Naive thymus-derived CD4-positive, alpha-beta T cell (primary cell): ENCODE measurements at regions of chr20 and their contacts with region 1.

Region 1: GRCh38 chr20:45987108-45987780 is 15.2 kb upstream of the ZNF335 start:
- DNase-seq: peak; percentile 53 to 80 (median 72)
- ATAC-seq: peak; percentile 98
- H3K4me3 ChIP-seq: no peak overlapping the region
- H3K4me3 Mint-ChIP-seq: no peak overlapping the region
- H3K27ac ChIP-seq: no peak overlapping the region
- H3K27ac Mint-ChIP-seq: no peak overlapping the region
- H3K4me1 ChIP-seq: no peaks in the 10 kb centered on the region
- H3K4me1 Mint-ChIP-seq: peaks cover 0 to 13% (median 0%) of the 10 kb centered on the region in 7 donors
- H3K27me3 ChIP-seq: no peaks in the 10 kb centered on the region
- H3K27me3 Mint-ChIP-seq: peaks cover 0 to 28% (median 5%) of the 10 kb centered on the region in 5 donors

Region 2: DNA sequence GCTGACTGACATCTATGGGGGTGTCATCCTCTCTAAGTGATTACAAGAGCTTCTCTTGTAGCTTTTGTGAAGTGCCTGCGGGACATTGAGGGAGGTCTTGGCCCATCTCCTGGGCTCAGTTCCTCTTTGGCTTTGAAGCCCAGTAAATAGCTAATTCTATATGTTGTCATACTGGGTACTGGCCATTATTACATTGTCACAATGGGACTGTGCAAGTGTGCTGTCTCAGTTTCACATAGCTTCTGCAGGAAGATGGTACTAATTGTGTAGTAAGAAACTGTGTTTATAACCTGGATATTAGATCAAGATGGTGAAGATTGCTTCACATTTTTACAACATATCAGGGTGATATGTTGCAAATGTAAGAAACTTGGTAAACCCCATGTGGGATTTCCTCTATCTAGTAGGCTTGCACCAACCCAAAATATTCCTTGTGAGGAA is 491.7 kb before region 1 on chr20:
- CTCF ChIA-PET with region 1: no interaction called
- POLR2A ChIA-PET with region 1: no interaction called
- intact Hi-C with region 1: no loop called
- DNase-seq: no peak
- ATAC-seq: peak; percentile 67
- H3K4me3 ChIP-seq: no peak overlapping the region
- H3K4me3 Mint-ChIP-seq: no peak overlapping the region
- H3K27ac ChIP-seq: no peak overlapping the region
- H3K27ac Mint-ChIP-seq: no peak overlapping the region
- H3K4me1 ChIP-seq: no peaks in the 10 kb centered on the region
- H3K4me1 Mint-ChIP-seq: no peaks in the 10 kb centered on the region
- H3K27me3 ChIP-seq: no peaks in the 10 kb centered on the region
- H3K27me3 Mint-ChIP-seq: peaks cover 12 to 39% (median 19%) of the 10 kb centered on the region in 5 donors

Region 3: DNA sequence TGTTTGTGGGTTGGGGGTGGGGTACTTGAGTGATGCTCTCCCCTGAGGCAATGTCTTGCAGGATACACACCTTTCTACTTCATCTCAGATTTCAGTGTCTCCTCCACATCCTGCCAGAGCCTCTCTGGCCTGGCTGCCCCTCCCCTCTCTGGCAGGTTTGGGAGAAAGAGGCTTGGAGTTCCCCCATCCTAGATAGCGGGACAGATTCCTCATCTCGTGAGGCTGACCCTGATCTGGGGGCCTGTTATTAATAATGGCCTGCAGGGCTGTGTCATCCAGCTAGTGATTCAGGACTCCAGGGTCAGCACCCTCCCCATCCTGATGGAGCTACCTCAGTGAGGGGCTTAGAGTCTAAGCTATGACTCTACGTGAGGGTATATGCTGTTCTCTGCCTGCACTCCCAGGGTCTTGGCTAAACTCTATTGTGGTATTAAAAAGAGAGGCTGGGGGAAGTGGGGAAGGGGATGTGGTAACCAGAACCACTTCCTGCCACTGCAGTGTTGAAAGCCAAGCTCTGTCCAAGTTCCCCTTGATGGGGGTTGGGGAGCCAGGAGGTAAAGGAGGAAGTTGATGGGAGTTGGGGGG is 17.7 kb after region 1 on chr20:
- CTCF ChIA-PET with region 1: interaction called, 9 read pairs
- POLR2A ChIA-PET with region 1: interaction called, 4 read pairs
- intact Hi-C with region 1: loop called in 1 of 2 experiments (anchors 1 kb)
- DNase-seq: peak in 6 of 9 donors; percentile 42 to 73 (median 58)
- ATAC-seq: peak; percentile 71
- H3K4me3 ChIP-seq: peak overlapping the region; percentile 51
- H3K4me3 Mint-ChIP-seq: peak overlapping the region; percentile 68 to 85 (median 82)
- H3K27ac ChIP-seq: no peak overlapping the region
- H3K27ac Mint-ChIP-seq: peak overlapping the region; percentile 38 to 95 (median 71)
- H3K4me1 ChIP-seq: peaks cover 44 to 59% of the 10 kb centered on the region in 2 donors
- H3K4me1 Mint-ChIP-seq: peaks cover 57 to 91% (median 83%) of the 10 kb centered on the region in 7 donors
- H3K27me3 ChIP-seq: no peaks in the 10 kb centered on the region
- H3K27me3 Mint-ChIP-seq: peaks cover 12 to 30% (median 18%) of the 10 kb centered on the region in 5 donors

Region 4: DNA sequence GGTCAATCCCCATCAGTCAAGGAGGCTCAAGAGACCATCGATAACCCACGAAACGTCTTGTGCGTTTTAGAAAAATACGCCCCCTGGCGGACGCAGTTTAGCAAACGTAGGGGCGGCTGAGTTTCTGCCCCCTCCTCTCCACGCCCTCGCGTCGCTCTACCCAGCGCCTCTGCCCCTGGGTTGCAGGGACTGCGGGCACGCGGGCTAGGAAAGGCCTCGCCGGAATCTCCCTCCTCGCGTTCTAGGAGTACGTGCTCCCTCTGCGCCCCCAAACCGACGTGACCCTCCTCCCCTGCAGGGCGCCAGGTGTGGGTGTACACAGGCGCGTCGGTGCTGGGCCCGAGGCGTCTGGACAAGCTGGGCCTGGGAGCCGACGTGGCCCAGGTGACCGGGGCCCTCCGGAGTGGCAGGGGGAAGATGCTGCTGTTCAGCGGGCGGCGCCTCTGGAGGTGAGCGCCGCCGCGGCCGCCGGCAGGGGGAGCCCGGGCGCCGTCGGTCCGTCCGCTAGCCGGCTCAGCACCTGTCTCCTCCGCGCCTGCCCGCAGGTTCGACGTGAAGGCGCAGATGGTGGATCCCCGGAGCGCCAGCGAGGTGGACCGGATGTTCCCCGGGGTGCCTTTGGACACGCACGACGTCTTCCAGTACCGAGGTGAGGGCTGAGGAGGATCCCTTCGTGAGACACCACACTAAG is 26.7 kb after region 1 on chr20:
- CTCF ChIA-PET with region 1: interaction called, 32 read pairs
- POLR2A ChIA-PET with region 1: interaction called, 4 read pairs
- intact Hi-C with region 1: loop called (anchors 1 kb)
- DNase-seq: peak; percentile 39 to 73 (median 60)
- ATAC-seq: peak; percentile 76
- H3K4me3 ChIP-seq: peak overlapping the region; percentile 32
- H3K4me3 Mint-ChIP-seq: peak overlapping the region; percentile 23 to 76 (median 58)
- H3K27ac ChIP-seq: no peak overlapping the region
- H3K27ac Mint-ChIP-seq: peak overlapping the region in 3 of 9 donors; percentile 1 to 43 (median 29)
- H3K4me1 ChIP-seq: peaks cover 24 to 27% of the 10 kb centered on the region in 2 donors
- H3K4me1 Mint-ChIP-seq: peaks cover 38 to 61% (median 48%) of the 10 kb centered on the region in 7 donors
- H3K27me3 ChIP-seq: peaks cover 15 to 16% of the 10 kb centered on the region in 2 donors
- H3K27me3 Mint-ChIP-seq: peaks cover 52 to 68% (median 55%) of the 10 kb centered on the region in 5 donors

Region 5: GRCh38 chr20:47875714-47875998 is 1888.4 kb after region 1 on chr20:
- CTCF ChIA-PET with region 1: no interaction called
- POLR2A ChIA-PET with region 1: no interaction called
- intact Hi-C with region 1: no loop called
- DNase-seq: no peak
- ATAC-seq: no peak
- H3K4me3 ChIP-seq: no peak overlapping the region
- H3K4me3 Mint-ChIP-seq: no peak overlapping the region
- H3K27ac ChIP-seq: no peak overlapping the region
- H3K27ac Mint-ChIP-seq: no peak overlapping the region
- H3K4me1 ChIP-seq: no peaks in the 10 kb centered on the region
- H3K4me1 Mint-ChIP-seq: no peaks in the 10 kb centered on the region
- H3K27me3 ChIP-seq: no peaks in the 10 kb centered on the region
- H3K27me3 Mint-ChIP-seq: peaks cover 2 to 17% (median 6%) of the 10 kb centered on the region in 5 donors